ENCODE measurements at regions of chr17 and their contacts with region 1.

Region 1: GRCh38 chr17:28494445-28495188 is 11.5 kb upstream of the FOXN1 start:
- DNase-seq: peak; percentile 24
- H3K4me3 ChIP-seq: no peak overlapping the region
- CTCF ChIP-seq: peak; percentile 92

Region 2: GRCh38 chr17:28547623-28548416 is 53.2 kb after region 1 on chr17:
- in situ Hi-C with region 1: loop called (anchors 5 kb)
- DNase-seq: peak; percentile 18
- H3K4me3 ChIP-seq: no peak overlapping the region
- CTCF ChIP-seq: peak; percentile 96